HCT116 (cell line): ENCODE measurements at regions of chr14 and their contacts with region 1.

Region 1: DNA sequence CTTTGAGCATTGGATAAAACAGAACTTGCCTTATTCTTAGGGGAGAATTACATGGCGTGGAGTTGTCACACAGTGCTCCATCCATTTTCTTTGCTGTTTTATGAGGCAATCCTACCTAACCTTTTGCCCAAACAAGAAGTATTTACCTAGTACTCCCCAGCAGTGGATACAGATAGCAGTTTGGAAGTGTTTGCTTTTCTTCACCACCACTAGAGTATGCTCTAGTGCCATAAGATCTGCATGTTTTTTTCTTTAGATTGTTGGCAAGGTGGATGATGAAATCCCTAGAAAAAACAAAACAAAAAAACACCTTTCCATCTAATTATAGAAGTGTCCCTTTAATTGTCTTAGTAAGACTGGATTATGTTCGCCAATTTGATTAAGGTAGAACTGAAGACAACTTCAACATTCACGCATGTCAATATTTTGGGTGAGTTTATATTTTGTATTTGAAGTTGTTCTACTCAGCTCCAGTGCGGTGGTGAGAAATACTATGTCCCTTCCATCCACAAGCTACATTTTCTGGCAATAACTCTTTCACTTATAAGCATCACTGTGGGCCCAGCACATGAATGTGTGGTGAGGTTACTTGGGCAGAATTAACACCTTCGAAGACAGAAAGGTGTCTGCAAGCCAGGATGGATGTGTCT is 23.6 kb upstream of the TMEM260 start:
- DNase-seq: peak; percentile 60
- ATAC-seq: peak; percentile 81
- H3K4me3 ChIP-seq: no peak overlapping the region
- H3K27ac ChIP-seq: no peak overlapping the region
- H3K4me1 ChIP-seq: no peaks in the 10 kb centered on the region
- H3K27me3 ChIP-seq: peaks cover 36% of the 10 kb centered on the region; the same call in 1 of the 2 replicates
- CTCF ChIP-seq: peak; percentile 65 to 70 (median 68)
- POLR2A ChIP-seq: no peak
- RAD21 ChIP-seq: peak; percentile 81

Region 2: DNA sequence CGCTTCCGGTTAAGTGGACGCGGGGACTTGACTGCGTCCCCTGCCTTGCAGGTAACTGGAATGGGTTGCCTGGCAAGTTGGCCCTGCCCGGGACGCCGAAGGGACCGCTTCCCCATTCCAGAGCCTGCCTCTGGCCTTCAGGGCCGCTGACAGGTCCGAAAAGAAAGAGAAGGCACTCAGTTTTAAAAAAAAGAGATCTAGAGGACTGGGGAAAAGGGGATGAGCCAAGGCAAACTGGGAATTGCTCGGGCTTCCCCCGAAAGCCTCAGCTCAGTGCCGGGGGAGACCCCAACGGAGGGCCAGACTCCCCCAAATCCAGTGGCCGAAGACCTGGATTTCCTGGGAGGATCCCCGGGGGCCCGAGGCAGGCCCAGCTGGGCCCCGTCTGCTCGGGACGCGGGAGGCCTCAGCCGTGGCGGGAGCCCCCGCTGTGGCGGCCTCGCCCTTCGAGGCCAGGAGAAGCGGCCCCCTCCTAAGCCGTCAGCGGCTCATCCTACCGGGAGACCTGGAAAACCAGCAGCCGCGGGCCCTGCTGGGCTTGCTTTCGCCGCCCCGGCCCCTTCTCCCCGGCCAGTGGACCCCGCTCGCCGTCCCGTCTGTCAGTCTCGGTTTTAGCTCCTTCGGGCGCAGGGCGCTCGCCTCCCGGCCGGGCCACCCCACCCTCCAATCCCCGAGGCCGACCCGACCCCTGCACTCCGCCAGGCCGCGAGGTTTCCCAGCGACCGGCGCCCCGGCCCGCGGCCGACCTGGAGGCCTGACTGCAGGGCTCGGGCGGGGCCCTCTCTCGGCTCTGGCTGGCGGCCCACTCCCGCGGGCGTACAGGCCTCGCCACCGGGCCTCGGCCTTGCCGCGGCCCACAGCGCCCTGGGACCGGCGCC is 241.8 kb after region 1 on chr14:
- CTCF ChIA-PET with region 1: no interaction called
- POLR2A ChIA-PET with region 1: no interaction called
- RAD21 ChIA-PET with region 1: no interaction called
- intact Hi-C with region 1: no loop called
- DNase-seq: no peak
- ATAC-seq: no peak
- H3K4me3 ChIP-seq: no peak overlapping the region
- H3K27ac ChIP-seq: no peak overlapping the region
- H3K4me1 ChIP-seq: no peaks in the 10 kb centered on the region
- H3K27me3 ChIP-seq: peaks cover 38% of the 10 kb centered on the region
- CTCF ChIP-seq: no peak
- POLR2A ChIP-seq: no peak
- RAD21 ChIP-seq: no peak

Region 3: DNA sequence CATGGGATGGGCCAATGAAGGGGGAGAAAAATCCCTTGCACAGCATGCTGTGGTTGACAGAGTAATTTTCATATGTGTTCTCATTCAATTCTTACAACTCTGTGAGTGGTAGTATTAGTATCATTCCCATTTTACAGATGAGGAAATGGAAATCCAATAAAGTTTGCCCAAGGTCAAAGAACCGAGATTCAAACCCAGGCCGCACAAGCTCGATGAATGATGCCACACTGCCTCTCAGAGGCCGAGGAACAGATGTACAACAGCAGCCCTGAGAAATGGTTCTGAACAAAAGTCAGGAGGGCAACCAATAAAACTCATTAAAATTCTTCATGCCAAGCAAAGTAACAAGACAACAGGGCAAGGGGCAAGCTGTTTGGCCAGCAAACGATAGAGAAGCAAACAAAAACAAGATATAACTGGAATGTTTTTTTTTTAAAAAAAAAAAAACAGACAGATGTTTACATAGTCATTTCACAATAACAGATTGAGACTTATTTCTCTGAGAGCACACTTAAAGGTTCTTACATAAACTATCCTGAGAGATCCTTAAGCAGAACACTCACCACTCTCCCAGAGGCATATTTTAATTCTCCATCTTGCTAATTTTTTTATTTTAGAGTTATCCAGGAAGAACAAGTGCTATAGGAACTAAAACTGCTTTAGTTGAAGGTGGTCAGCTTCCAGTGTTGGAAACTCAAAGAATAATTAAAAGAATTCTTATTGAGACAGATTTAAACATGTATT is 626.9 kb after region 1 on chr14:
- CTCF ChIA-PET with region 1: interaction called, 4 read pairs
- POLR2A ChIA-PET with region 1: no interaction called
- RAD21 ChIA-PET with region 1: no interaction called
- intact Hi-C with region 1: loop called (anchors 2 kb)
- DNase-seq: peak; percentile 16
- ATAC-seq: peak; percentile 78
- H3K4me3 ChIP-seq: no peak overlapping the region
- H3K27ac ChIP-seq: no peak overlapping the region
- H3K4me1 ChIP-seq: no peaks in the 10 kb centered on the region
- H3K27me3 ChIP-seq: peaks cover 28% of the 10 kb centered on the region
- CTCF ChIP-seq: peak; percentile 63 to 75 (median 64)
- POLR2A ChIP-seq: no peak
- RAD21 ChIP-seq: peak; percentile 86

Region 4: DNA sequence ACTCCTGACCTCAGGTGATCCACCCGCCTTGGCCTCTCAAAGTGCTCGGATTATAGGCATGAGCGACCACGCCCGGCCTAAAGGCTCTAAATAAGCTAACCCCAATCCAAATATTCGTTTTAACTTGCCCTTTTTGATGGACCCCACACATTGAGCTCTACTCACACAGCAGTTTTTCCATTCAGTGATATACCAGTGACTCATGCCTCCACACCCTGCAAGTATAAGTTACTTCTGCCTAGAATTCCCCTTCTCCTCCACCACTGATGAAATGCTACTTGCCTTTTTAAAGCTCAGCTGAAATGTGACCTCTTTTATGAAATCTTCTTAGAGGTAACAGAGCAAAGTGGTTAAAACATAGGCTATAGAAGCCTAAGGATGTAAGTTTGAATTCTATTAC is 643.9 kb after region 1 on chr14:
- CTCF ChIA-PET with region 1: no interaction called
- POLR2A ChIA-PET with region 1: no interaction called
- RAD21 ChIA-PET with region 1: no interaction called
- intact Hi-C with region 1: loop called (anchors 5 kb)
- DNase-seq: no peak
- ATAC-seq: no peak
- H3K4me3 ChIP-seq: no peak overlapping the region
- H3K27ac ChIP-seq: no peak overlapping the region
- H3K4me1 ChIP-seq: no peaks in the 10 kb centered on the region
- H3K27me3 ChIP-seq: no peaks in the 10 kb centered on the region
- CTCF ChIP-seq: no peak
- POLR2A ChIP-seq: no peak
- RAD21 ChIP-seq: no peak

Region 5: DNA sequence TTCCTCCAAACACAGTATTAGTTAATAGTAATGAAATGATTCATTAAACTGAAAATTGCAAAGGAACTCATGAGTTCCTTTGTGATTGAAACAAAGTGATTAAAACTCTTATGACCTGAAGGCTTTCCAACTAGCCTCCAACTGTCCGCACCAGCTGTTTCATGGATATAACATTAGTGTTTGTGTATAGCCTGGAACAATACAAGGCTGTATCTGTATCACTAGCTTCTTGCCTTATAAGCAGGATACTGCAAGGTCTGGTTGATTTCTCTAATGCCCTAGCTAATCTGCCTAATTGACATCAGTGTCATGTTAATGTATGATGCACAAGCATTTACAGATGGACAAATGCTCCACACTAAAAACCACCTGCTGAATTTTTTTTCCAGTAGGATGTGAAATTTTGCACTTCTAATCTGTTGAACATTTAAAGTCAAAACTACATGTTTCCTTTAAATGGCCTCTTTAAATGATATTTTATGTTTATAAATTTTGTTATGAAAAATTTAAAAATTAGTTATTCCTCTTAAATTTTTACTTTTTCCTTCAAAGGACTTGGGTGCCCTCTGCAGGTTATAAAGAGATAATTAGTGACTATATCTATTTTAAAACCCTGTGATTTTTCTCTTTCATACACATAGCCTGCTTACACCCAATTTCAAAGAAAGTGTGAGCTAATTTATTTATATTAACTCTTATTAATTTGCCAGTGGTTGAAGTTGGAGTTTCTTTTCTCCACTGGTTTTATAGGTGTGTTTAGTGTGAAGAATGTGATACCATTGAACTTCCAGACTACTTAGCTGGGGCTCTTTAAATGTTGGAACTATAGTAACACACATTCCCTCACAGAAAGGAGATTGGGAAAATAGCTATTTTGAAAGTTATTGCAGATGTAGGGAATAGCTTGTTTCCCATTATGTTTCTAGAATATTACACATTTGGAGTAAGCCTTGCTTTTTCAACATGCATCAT is 738.1 kb after region 1 on chr14:
- CTCF ChIA-PET with region 1: no interaction called
- POLR2A ChIA-PET with region 1: no interaction called
- RAD21 ChIA-PET with region 1: no interaction called
- intact Hi-C with region 1: loop called (anchors 10 kb)
- DNase-seq: no peak
- ATAC-seq: no peak
- H3K4me3 ChIP-seq: no peak overlapping the region
- H3K27ac ChIP-seq: no peak overlapping the region
- H3K4me1 ChIP-seq: no peaks in the 10 kb centered on the region
- H3K27me3 ChIP-seq: no peaks in the 10 kb centered on the region
- CTCF ChIP-seq: peak in 2 of 3 experiments; percentile 18 to 30; a peak in 2 of 6 replicates
- POLR2A ChIP-seq: no peak
- RAD21 ChIP-seq: peak; percentile 50